PC-3 (cell line): ENCODE measurements at regions of chr6 and their contacts with region 1.

Region 1: DNA sequence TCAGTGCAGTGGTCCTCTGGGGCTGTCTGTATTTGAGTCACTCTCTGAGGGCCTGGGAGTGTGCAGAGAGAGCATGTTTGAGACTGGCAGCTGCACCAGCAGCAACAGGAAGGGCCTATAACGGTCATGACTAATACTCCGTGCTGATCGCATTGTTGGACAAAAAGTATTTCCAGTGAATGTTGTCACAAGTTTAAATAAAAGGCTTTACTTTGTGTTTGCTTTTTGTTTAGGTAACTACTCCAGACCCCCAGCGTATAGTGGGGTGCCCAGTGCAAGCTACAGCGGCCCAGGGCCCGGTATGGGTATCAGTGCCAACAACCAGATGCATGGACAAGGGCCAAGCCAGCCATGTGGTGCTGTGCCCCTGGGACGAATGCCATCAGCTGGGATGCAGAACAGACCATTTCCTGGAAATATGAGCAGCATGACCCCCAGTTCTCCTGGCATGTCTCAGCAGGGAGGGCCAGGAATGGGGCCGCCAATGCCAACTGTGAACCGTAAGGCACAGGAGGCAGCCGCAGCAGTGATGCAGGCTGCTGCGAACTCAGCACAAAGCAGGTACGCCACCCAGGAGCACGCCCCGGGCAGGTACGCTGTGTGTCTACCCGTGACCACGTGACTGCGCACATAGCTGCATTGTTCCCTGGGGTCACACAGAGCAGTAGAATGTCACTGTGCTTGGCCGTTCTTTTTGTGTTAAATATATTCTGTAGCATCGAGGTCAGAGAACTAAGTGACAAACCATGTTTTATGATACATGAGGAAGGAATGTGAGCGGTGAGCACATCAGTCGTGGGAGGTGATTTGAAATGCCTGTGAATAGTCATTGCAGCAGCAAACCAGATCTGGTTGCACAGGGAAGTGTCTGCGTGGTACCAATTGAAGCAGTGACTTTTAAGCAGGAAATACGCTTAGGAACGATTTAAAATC is 174.7 kb downstream of the TMEM242 start:
- DNase-seq: peak; percentile 88
- ATAC-seq: peak; percentile 84
- H3K4me3 ChIP-seq: peak overlapping the region; percentile 53
- H3K27ac ChIP-seq: peak overlapping the region; percentile 94
- H3K4me1 ChIP-seq: peaks cover 36% of the 10 kb centered on the region
- H3K27me3 ChIP-seq: no peaks in the 10 kb centered on the region
- CTCF ChIP-seq: no peak

Region 2: GRCh38 chr6:157034436-157035230 is 114.0 kb before region 1 on chr6:
- CTCF ChIA-PET with region 1: no interaction called
- POLR2A ChIA-PET with region 1: no interaction called
- intact Hi-C with region 1: loop called (anchors 2 kb)
- DNase-seq: peak; percentile 53
- ATAC-seq: peak; percentile 61
- H3K4me3 ChIP-seq: peak overlapping the region; percentile 71
- H3K27ac ChIP-seq: no peak overlapping the region
- H3K4me1 ChIP-seq: peaks cover 23% of the 10 kb centered on the region
- H3K27me3 ChIP-seq: no peaks in the 10 kb centered on the region
- CTCF ChIP-seq: peak; percentile 67

Region 3: DNA sequence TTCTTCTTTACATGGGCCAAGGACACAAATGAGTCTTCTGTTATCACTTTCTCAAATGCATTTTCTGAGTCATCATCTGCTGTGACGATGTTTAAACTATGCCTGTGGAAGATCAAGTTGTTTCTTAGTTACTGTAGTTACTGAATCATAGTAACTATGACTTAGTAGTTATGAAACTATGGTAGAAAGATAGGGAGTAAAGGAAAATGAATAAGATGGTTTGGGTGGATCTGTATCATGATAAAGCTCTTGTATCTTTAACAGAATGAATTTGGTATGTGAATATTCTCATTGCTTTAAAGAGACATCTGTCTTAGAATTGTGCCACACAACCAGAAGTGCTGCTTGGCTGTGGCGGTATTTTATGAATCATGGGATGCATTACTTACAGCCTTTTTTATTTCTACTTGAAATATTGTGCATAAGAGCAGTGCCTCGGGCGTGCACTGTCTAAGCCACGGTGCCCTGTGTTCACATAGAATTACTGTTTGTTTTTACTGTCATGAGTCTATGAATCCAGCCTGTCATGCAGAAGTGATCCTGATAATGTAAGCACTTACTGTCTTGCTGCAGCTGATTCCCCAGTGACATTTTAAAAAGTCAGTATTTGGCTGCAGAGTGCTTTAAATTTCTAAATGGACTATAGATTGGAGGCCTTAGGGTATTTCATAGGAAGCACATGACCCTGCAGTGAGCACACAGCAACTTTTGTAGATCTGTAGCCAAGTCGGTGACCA is 40.6 kb before region 1 on chr6:
- CTCF ChIA-PET with region 1: no interaction called
- POLR2A ChIA-PET with region 1: no interaction called
- intact Hi-C with region 1: loop called (anchors 2 kb)
- DNase-seq: peak; percentile 82
- ATAC-seq: peak; percentile 77
- H3K4me3 ChIP-seq: 0 out of 2 replicates have a peak overlapping the region, but pooled peaks have one; percentile 16
- H3K27ac ChIP-seq: peak overlapping the region; percentile 79
- H3K4me1 ChIP-seq: peaks cover 37% of the 10 kb centered on the region
- H3K27me3 ChIP-seq: no peaks in the 10 kb centered on the region
- CTCF ChIP-seq: no peak

Region 4: GRCh38 chr6:157184202-157185020 is 35.8 kb after region 1 on chr6:
- CTCF ChIA-PET with region 1: no interaction called
- POLR2A ChIA-PET with region 1: no interaction called
- intact Hi-C with region 1: loop called (anchors 5 kb)
- DNase-seq: peak; percentile 71
- ATAC-seq: peak; percentile 49
- H3K4me3 ChIP-seq: no peak overlapping the region
- H3K27ac ChIP-seq: peak overlapping the region; percentile 25
- H3K4me1 ChIP-seq: peaks cover 37% of the 10 kb centered on the region
- H3K27me3 ChIP-seq: no peaks in the 10 kb centered on the region
- CTCF ChIP-seq: peak; percentile 90

Region 5: GRCh38 chr6:157219201-157220200 is 70.8 kb after region 1 on chr6:
- CTCF ChIA-PET with region 1: no interaction called
- POLR2A ChIA-PET with region 1: no interaction called
- intact Hi-C with region 1: no loop called
- DNase-seq: peak; percentile 58
- ATAC-seq: peak; percentile 53
- H3K4me3 ChIP-seq: peak overlapping the region; percentile 1; the same call in 1 of the 2 replicates
- H3K27ac ChIP-seq: peak overlapping the region; percentile 65
- H3K4me1 ChIP-seq: peaks cover 33% of the 10 kb centered on the region
- H3K27me3 ChIP-seq: no peaks in the 10 kb centered on the region
- CTCF ChIP-seq: no peak